Naive thymus-derived CD8-positive, alpha-beta T cell (primary cell): ENCODE measurements at regions of chr9 and their contacts with region 1.

Region 1: GRCh38 chr9:78031893-78032729 is 500 bp upstream of the GNAQ start:
- DNase-seq: peak in 9 of 10 donors; percentile 29 to 85 (median 69)
- ATAC-seq: peak; percentile 48 to 53
- H3K4me3 Mint-ChIP-seq: peak overlapping the region; percentile 86 to 97 (median 92)
- H3K27ac Mint-ChIP-seq: peak overlapping the region; percentile 89 to 97 (median 96)
- H3K4me1 Mint-ChIP-seq: peaks cover 27 to 67% (median 57%) of the 10 kb centered on the region in 4 donors
- H3K27me3 Mint-ChIP-seq: peaks cover 0 to 6% (median 0%) of the 10 kb centered on the region in 5 donors

Region 2: DNA sequence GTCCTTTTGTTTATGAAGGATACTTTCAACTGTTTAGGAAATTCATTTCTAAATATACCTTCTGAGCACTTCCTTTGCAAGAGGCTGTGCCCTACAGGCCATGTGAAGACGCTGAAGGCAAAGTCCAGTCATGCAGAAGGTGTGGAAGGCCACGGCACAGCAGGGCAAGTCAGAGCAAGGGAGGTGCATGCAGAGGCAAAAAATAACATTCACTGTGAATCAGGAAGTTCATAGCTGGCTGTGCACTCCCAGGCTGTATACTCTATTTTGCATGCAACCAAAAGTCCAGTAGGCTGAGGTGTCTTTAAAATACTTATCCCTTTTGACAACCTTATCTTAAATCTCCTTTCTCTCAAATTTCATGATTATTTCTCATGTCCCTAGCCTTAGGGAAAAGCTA is 50.8 kb before region 1 on chr9:
- POLR2A ChIA-PET with region 1: interaction called, 16 read pairs
- DNase-seq: no peak
- ATAC-seq: peak in 1 of 2 donors; percentile 33
- H3K4me3 Mint-ChIP-seq: peak overlapping the region; percentile 32 to 75 (median 58)
- H3K27ac Mint-ChIP-seq: peak overlapping the region in 9 of 10 donors; percentile 29 to 88 (median 76)
- H3K4me1 Mint-ChIP-seq: peaks cover 36 to 81% (median 78%) of the 10 kb centered on the region in 4 donors
- H3K27me3 Mint-ChIP-seq: no peaks in the 10 kb centered on the region

Region 3: DNA sequence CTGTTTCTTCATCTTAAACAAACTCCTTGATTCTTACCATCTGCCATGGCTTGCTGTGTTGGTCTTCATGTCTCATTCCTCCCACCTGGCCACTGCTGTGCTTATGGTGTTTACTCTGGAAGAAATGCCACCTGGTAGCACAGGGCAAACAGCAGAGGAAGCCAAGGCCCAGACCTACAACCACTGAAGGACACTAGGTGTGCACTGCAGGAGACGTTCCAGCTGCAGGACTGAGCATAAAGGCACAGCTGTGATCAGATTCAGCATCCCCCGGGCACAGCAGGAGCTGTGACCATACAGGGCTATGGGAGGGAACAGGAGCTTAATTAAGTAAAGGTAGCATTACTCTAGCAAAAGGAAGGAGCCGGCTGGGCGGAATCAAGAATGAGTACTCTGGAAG is 12.1 kb after region 1 on chr9:
- POLR2A ChIA-PET with region 1: no interaction called
- DNase-seq: no peak
- ATAC-seq: no peak
- H3K4me3 Mint-ChIP-seq: no peak overlapping the region
- H3K27ac Mint-ChIP-seq: no peak overlapping the region
- H3K4me1 Mint-ChIP-seq: no peaks in the 10 kb centered on the region
- H3K27me3 Mint-ChIP-seq: peaks cover 0 to 2% (median 0%) of the 10 kb centered on the region in 5 donors

Region 4: DNA sequence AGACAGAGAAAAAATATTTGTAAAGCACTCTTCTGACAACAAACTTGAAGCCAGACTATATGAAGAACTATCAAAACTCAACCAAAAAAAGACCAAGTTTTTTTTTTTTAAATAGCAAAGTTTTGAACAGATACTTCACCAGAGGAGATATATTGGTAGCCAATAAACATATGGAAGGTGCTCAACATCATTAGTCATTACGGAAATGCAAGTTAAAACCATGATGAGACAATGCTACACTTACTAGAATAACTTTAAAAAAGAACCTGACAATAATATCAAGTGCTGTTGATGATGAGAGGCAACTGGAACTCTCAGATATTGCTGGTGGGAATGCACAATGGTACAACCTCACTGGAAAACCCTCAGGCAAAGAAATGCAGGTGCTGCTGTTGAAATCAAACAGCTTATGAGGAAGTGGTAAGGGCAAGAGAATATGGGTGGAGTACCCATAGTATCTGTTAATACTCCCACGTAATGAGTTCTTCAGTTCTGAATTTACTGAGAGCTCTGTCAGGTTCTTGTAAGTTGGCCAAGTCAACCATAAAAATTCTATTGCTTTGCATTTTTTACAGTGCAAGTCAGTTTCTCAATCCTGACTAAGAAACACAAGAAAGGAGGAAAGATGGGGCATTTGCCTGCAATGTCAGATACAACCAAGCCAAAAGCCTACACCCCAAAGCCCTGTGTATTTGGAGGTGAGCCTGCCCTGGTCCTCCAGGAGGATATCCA is 86.8 kb after region 1 on chr9:
- POLR2A ChIA-PET with region 1: interaction called, 11 read pairs
- DNase-seq: peak in 4 of 10 donors; percentile 19 to 62 (median 38)
- ATAC-seq: peak; percentile 94 to 97
- H3K4me3 Mint-ChIP-seq: peak overlapping the region; percentile 19 to 86 (median 73)
- H3K27ac Mint-ChIP-seq: peak overlapping the region; percentile 81 to 92 (median 85)
- H3K4me1 Mint-ChIP-seq: peaks cover 21 to 44% (median 38%) of the 10 kb centered on the region in 4 donors
- H3K27me3 Mint-ChIP-seq: peaks cover 0 to 2% (median 0%) of the 10 kb centered on the region in 5 donors